GM12878 (cell line): ENCODE measurements at regions of chr14 and their contacts with region 1.

Region 1: GRCh38 chr14:20327005-20327869 is 5.8 kb downstream of the CCNB1IP1 start:
- DNase-seq: peak; percentile 35
- ATAC-seq: peak; percentile 62
- H3K4me3 ChIP-seq: peak overlapping the region; percentile 50; the same call in 1 of the 2 replicates
- H3K27ac ChIP-seq: no peak overlapping the region
- H3K4me1 ChIP-seq: no peaks in the 10 kb centered on the region
- H3K27me3 ChIP-seq: no peaks in the 10 kb centered on the region
- CTCF ChIP-seq: peak; percentile 51 to 81 (median 62); a peak in 5 of 6 replicates
- EP300 ChIP-seq: no peak
- POLR2A ChIP-seq: no peak
- RAD21 ChIP-seq: peak; percentile 80

Region 2: DNA sequence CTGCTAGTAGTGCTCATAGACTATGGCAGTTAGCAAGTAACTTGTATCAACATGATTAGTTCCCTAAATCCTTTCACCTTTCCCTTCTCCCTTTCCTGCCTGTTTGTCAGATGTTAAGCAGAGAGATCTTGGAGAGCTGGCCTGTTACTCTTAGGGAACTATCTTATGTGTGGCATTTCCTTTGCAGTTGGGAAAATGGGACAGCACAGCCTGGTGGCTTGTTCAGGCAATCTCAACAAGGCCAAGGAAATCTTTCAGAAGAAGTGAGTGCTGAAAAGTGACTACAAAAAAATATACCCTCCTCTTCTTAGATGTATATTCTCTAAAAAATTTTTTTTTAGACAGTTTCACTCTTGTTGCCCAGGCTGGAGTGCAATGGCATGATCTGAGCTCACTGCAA is 23.6 kb after region 1 on chr14:
- CTCF ChIA-PET with region 1: interaction called, 20 read pairs
- POLR2A ChIA-PET with region 1: no interaction called
- RAD21 ChIA-PET with region 1: interaction called, 4 read pairs
- SMC1A ChIA-PET with region 1: interaction called, 17 read pairs
- in situ Hi-C with region 1: no loop called
- intact Hi-C with region 1: no loop called
- DNase-seq: no peak
- ATAC-seq: no peak
- H3K4me3 ChIP-seq: no peak overlapping the region
- H3K27ac ChIP-seq: no peak overlapping the region
- H3K4me1 ChIP-seq: no peaks in the 10 kb centered on the region
- H3K27me3 ChIP-seq: no peaks in the 10 kb centered on the region
- CTCF ChIP-seq: peak in 2 of 3 experiments; percentile 16; a peak in 2 of 6 replicates
- EP300 ChIP-seq: no peak
- POLR2A ChIP-seq: no peak
- RAD21 ChIP-seq: no peak

Region 3: DNA sequence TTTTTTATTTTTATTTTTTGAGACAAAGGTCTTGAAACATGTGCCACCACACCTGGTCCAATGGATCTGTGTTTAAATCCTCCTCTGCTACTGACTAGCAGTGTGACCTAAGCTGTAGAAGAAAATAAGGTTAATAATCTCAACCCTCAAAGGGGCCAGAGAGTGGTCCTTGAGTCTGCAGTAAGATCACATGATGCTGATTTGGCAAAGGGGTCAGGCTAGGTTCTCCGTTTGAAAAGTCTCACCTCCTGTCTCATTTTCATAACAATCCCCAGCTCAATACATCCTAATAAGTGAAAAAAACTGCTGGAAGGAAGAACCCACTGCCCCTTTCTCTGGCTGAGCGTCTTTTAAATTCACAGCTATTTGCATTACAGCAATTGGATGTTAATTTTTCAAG is 94.0 kb after region 1 on chr14:
- CTCF ChIA-PET with region 1: interaction called, 91 read pairs
- POLR2A ChIA-PET with region 1: interaction called, 3 read pairs
- RAD21 ChIA-PET with region 1: interaction called, 78 read pairs
- SMC1A ChIA-PET with region 1: interaction called, 56 read pairs
- in situ Hi-C with region 1: no loop called
- intact Hi-C with region 1: no loop called
- DNase-seq: no peak
- ATAC-seq: no peak
- H3K4me3 ChIP-seq: no peak overlapping the region
- H3K27ac ChIP-seq: no peak overlapping the region
- H3K4me1 ChIP-seq: peaks cover 5% of the 10 kb centered on the region; the same call in 1 of the 2 replicates
- H3K27me3 ChIP-seq: no peaks in the 10 kb centered on the region
- CTCF ChIP-seq: no peak
- EP300 ChIP-seq: no peak
- POLR2A ChIP-seq: no peak
- RAD21 ChIP-seq: no peak

Region 4: GRCh38 chr14:20469242-20469889 is 142.1 kb after region 1 on chr14 and contains the start of gene PNP:
- CTCF ChIA-PET with region 1: interaction called, 12 read pairs
- POLR2A ChIA-PET with region 1: interaction called, 4 read pairs
- RAD21 ChIA-PET with region 1: interaction called, 4 read pairs
- SMC1A ChIA-PET with region 1: interaction called, 13 read pairs
- in situ Hi-C with region 1: no loop called
- intact Hi-C with region 1: no loop called
- DNase-seq: peak; percentile 65
- ATAC-seq: peak; percentile 97
- H3K4me3 ChIP-seq: peak within 1 kb of the TSS; percentile 85
- H3K27ac ChIP-seq: peak within 1 kb of the TSS; percentile 69
- H3K4me1 ChIP-seq: peaks cover 7% of the 10 kb centered on the region; the same call in 1 of the 2 replicates
- H3K27me3 ChIP-seq: no peaks in the 10 kb centered on the region
- CTCF ChIP-seq: 0 out of 6 replicates have a peak, but pooled peaks of 1 of the 3 experiments have one; percentile 7
- EP300 ChIP-seq: no peak
- POLR2A ChIP-seq: peak; percentile 100
- RAD21 ChIP-seq: no peak
- polyA plus RNA-seq, gene PNP: 103 to 123 TPM

Region 5: DNA sequence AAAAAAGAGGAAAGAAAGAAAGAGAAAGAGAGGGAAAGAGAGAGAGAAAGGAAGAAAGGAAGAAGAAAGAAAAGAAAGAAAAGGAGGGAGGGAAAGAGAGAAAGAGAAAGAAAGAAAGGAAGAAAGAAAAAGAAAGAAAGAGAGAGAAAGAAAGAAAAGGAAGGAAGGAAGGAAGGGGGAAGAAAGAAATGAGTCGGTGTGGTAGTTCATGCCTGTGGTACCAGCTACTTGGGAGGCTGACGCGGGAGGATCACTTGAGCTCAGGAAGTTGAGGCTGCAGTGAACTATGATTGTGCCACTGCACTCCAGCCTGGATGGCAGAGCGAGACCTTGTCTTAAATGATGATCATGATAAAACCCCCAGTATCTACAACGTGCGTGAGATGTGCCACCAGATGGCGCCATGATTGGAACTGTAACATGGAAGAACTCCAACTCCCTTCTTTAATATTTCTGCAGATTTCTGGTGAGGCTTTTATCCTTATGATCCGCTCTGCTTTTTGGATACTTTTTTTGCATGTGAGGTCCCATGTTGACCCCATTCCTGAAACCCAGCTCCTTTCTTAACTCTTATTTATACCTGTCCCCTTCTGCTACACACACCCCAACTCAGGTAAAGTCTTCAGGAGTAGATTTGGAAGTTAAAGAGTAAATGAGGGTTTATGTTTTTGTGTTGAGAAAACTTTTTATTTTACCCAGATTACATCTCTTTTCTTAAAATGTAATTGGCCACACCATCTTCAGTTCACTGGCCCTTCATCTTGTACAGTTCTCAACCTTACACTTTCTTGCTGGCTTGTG is 203.7 kb after region 1 on chr14:
- CTCF ChIA-PET with region 1: interaction called, 7 read pairs
- POLR2A ChIA-PET with region 1: no interaction called
- RAD21 ChIA-PET with region 1: interaction called, 4 read pairs
- SMC1A ChIA-PET with region 1: interaction called, 4 read pairs
- in situ Hi-C with region 1: no loop called
- intact Hi-C with region 1: loop called (anchors 5 kb)
- DNase-seq: peak; percentile 21
- ATAC-seq: peak; percentile 98
- H3K4me3 ChIP-seq: no peak overlapping the region
- H3K27ac ChIP-seq: no peak overlapping the region
- H3K4me1 ChIP-seq: no peaks in the 10 kb centered on the region
- H3K27me3 ChIP-seq: no peaks in the 10 kb centered on the region
- CTCF ChIP-seq: peak; percentile 65 to 75 (median 73)
- EP300 ChIP-seq: no peak
- POLR2A ChIP-seq: no peak
- RAD21 ChIP-seq: peak; percentile 66

Region 6: DNA sequence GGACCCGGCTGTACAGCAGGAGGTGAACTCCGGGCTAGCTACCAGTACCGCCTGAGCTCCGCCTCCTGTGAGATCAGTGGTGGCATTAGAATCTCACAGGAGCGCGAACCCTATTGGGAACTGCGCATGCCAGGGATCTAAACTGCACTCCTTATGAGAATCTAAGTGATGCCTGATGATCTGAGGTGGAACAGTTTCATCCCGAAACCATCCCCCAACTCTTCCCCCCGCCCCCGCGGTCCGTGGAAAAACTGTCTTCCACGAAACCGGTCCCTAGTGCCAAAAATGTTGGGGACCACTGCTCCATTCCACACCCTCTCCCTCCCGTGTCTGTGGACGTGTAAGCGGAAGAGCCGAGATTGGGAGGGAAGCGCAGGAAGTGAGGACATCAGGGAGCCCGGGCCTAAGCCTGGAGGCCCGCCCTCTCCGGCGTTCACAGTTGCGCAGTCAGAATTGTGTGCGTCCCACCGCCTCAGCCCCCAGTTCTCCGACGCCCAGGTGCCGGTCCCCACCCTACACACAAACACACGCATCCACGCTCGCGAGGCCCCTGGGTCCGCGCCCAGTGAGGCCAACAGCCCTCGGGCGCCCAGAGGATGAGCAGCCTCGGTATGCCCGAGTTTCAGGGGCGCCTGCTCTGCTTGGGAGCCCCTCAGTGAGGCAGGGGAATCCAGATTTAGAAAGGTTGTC is 355.3 kb after region 1 on chr14:
- CTCF ChIA-PET with region 1: interaction called, 24 read pairs
- POLR2A ChIA-PET with region 1: interaction called, 3 read pairs
- RAD21 ChIA-PET with region 1: interaction called, 10 read pairs
- SMC1A ChIA-PET with region 1: interaction called, 4 read pairs
- in situ Hi-C with region 1: loop called (anchors 5 kb)
- intact Hi-C with region 1: loop called (anchors 2 kb)
- DNase-seq: no peak
- ATAC-seq: peak; percentile 74
- H3K4me3 ChIP-seq: peak overlapping the region; percentile 73
- H3K27ac ChIP-seq: peak overlapping the region; percentile 99
- H3K4me1 ChIP-seq: peaks cover 23% of the 10 kb centered on the region
- H3K27me3 ChIP-seq: no peaks in the 10 kb centered on the region
- CTCF ChIP-seq: no peak
- EP300 ChIP-seq: no peak
- POLR2A ChIP-seq: peak; percentile 87
- RAD21 ChIP-seq: no peak